HepG2 (cell line): ENCODE measurements at regions of chr12 and their contacts with region 1.

Region 1: GRCh38 chr12:82527165-82527780 is 159.4 kb upstream of the TMTC2 start:
- DNase-seq: peak; percentile 46
- ATAC-seq: peak; percentile 57; the same call in 2 of the 3 replicates
- H3K4me3 ChIP-seq: no peak overlapping the region
- H3K27ac ChIP-seq: no peak overlapping the region
- H3K4me1 ChIP-seq: peaks cover 8% of the 10 kb centered on the region; the same call in 1 of the 2 replicates
- H3K27me3 ChIP-seq: no peaks in the 10 kb centered on the region
- CTCF ChIP-seq: peak; percentile 72
- EP300 ChIP-seq: no peak
- POLR2A ChIP-seq: no peak
- RAD21 ChIP-seq: no peak; the same call in 1 of the 2 replicates

Region 2: DNA sequence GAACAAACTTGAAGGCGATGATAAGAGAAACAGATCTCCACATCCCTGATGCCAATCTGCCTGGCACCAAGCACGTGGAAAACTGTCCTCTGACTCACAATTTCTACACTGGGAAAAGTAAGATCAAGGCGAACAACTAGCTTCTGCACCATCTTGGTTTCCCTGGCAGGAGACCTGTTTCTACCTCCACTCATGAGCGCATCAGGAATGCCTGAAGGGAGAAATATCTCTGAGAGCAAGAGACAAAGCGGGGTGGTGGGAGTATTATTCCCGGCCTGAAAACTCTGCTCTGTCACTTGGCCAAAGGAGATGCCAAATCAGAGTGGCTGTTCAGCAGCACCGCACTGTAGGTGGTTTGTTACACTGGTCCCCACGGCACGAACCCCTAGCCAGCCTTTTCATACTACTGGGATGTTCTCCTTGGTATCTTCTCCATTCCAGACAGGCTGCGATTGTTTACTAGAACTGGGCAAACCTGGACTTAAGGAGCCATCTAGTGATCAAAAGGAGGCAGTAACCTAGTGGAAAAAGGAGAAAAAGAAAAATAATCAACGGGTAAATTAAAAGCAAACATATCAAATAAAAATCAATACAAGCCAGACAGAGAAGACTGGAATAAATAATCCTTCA is 100.4 kb after region 1 on chr12:
- CTCF ChIA-PET with region 1: no interaction called
- POLR2A ChIA-PET with region 1: no interaction called
- in situ Hi-C with region 1: no loop called
- intact Hi-C with region 1: loop called (anchors 1 kb)
- DNase-seq: peak; percentile 21
- ATAC-seq: peak; percentile 85
- H3K4me3 ChIP-seq: no peak overlapping the region
- H3K27ac ChIP-seq: no peak overlapping the region
- H3K4me1 ChIP-seq: no peaks in the 10 kb centered on the region
- H3K27me3 ChIP-seq: no peaks in the 10 kb centered on the region
- CTCF ChIP-seq: peak; percentile 62
- EP300 ChIP-seq: no peak
- POLR2A ChIP-seq: no peak
- RAD21 ChIP-seq: 0 out of 2 replicates have a peak, but pooled peaks have one; percentile 12

Region 3: GRCh38 chr12:82708061-82708879 is 181.0 kb after region 1 on chr12:
- CTCF ChIA-PET with region 1: no interaction called
- POLR2A ChIA-PET with region 1: no interaction called
- in situ Hi-C with region 1: no loop called
- intact Hi-C with region 1: no loop called
- DNase-seq: no peak
- ATAC-seq: peak; percentile 48; the same call in 2 of the 3 replicates
- H3K4me3 ChIP-seq: no peak overlapping the region
- H3K27ac ChIP-seq: no peak overlapping the region
- H3K4me1 ChIP-seq: no peaks in the 10 kb centered on the region
- H3K27me3 ChIP-seq: no peaks in the 10 kb centered on the region
- CTCF ChIP-seq: no peak
- EP300 ChIP-seq: no peak
- POLR2A ChIP-seq: no peak
- RAD21 ChIP-seq: no peak

Region 4: DNA sequence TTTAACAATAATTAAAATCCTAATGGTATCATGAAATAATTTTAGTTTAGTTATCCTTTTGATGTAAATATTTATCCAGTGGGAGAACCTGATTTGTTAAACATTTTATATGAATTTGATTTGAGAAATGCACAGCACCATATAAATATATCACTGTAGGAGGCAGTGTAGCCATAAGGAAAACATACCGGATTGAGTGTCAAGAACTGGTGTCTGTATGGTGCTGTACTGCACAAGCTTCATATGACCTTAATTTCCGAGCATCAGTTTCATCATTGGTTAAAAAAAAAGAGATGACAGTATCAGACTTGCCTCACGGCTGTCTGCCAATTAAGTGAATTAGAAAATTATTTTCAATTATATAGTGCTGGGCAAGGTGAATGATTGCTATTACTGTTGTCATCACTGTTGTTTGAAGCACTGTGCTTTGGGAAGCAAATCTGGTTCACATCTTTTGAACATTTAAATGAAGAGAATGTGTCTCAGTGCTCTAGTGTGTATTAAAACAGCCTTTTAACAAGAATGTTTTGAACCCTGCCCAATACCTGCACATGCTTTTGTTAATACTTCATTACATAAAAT is 231.6 kb after region 1 on chr12:
- CTCF ChIA-PET with region 1: no interaction called
- POLR2A ChIA-PET with region 1: no interaction called
- in situ Hi-C with region 1: no loop called
- intact Hi-C with region 1: no loop called
- DNase-seq: no peak
- ATAC-seq: no peak
- H3K4me3 ChIP-seq: no peak overlapping the region
- H3K27ac ChIP-seq: no peak overlapping the region
- H3K4me1 ChIP-seq: no peaks in the 10 kb centered on the region
- H3K27me3 ChIP-seq: no peaks in the 10 kb centered on the region
- CTCF ChIP-seq: no peak
- EP300 ChIP-seq: no peak
- POLR2A ChIP-seq: no peak
- RAD21 ChIP-seq: no peak

Region 5: DNA sequence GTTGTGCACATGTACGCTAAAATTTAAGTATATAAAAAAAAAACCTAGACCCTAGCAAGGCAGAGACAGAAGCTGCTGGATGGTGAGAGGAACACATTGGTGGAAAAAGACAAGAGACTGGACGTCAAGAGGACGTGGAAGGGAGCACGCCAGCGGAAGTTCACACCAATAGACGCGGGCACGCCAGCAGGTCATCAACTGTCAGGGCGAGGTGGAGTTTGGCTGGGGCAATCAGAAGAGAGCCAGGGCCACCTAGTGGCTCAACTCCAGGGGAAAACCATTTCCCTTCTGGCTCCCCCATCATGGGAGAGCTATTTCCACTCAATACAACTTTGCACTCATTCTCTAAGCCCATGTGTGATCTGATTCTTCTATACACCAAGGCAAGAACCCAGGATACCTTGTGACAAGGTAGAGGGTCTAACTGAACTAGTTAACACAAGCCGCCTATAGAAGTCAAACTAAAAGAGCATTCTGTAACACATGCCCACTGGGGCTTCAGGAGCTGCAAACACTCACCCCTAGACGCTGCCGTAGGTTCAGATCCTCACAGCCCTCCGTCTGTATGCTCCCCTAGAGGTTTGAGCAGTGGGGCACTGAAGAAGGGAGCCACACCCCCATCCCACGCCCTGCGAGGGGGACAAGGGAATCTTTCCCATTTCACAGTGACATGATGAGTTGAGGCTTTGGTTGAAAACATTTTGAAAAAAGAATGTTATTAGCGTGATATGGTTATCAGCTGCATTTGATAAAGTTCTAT is 862.1 kb after region 1 on chr12:
- CTCF ChIA-PET with region 1: no interaction called
- POLR2A ChIA-PET with region 1: no interaction called
- in situ Hi-C with region 1: no loop called
- intact Hi-C with region 1: loop called (anchors 5 kb)
- DNase-seq: no peak
- ATAC-seq: peak; percentile 37; the same call in 2 of the 3 replicates
- H3K4me3 ChIP-seq: no peak overlapping the region
- H3K27ac ChIP-seq: no peak overlapping the region
- H3K4me1 ChIP-seq: no peaks in the 10 kb centered on the region
- H3K27me3 ChIP-seq: no peaks in the 10 kb centered on the region
- CTCF ChIP-seq: peak; percentile 14; the same call in 1 of the 2 replicates
- EP300 ChIP-seq: no peak
- POLR2A ChIP-seq: no peak
- RAD21 ChIP-seq: no peak

Region 6: DNA sequence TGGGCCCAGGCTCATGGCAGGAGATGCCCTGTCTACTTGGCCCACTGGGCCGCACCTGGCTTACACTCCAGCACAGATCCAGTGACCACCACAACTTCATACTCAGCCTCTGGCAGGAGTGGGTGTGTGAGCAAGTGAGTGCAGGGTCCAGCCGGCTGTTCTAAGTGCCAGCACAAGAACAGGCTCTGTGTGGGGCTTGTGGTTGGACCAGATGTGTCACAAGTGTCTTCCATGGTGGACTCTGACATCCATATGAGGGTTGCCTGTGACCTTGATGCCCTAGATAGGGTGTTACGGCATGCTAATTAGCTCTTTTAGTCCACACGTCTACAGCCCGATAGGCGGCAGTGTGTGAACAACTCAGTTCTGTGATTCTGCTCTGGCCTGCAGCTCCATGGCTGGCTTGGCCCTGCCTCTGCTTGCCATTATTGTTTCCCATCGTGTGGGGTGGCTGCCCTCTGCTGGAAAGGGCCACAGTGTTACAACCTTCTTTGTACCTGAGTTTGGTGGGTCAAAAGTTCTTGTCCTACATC is 1296.2 kb after region 1 on chr12:
- CTCF ChIA-PET with region 1: no interaction called
- POLR2A ChIA-PET with region 1: no interaction called
- in situ Hi-C with region 1: no loop called
- intact Hi-C with region 1: loop called (anchors 5 kb)
- DNase-seq: peak; percentile 27
- ATAC-seq: peak; percentile 87
- H3K4me3 ChIP-seq: no peak overlapping the region
- H3K27ac ChIP-seq: no peak overlapping the region
- H3K4me1 ChIP-seq: no peaks in the 10 kb centered on the region
- H3K27me3 ChIP-seq: no peaks in the 10 kb centered on the region
- CTCF ChIP-seq: peak; percentile 42; the same call in 1 of the 2 replicates
- EP300 ChIP-seq: no peak
- POLR2A ChIP-seq: no peak
- RAD21 ChIP-seq: no peak

Region 7: DNA sequence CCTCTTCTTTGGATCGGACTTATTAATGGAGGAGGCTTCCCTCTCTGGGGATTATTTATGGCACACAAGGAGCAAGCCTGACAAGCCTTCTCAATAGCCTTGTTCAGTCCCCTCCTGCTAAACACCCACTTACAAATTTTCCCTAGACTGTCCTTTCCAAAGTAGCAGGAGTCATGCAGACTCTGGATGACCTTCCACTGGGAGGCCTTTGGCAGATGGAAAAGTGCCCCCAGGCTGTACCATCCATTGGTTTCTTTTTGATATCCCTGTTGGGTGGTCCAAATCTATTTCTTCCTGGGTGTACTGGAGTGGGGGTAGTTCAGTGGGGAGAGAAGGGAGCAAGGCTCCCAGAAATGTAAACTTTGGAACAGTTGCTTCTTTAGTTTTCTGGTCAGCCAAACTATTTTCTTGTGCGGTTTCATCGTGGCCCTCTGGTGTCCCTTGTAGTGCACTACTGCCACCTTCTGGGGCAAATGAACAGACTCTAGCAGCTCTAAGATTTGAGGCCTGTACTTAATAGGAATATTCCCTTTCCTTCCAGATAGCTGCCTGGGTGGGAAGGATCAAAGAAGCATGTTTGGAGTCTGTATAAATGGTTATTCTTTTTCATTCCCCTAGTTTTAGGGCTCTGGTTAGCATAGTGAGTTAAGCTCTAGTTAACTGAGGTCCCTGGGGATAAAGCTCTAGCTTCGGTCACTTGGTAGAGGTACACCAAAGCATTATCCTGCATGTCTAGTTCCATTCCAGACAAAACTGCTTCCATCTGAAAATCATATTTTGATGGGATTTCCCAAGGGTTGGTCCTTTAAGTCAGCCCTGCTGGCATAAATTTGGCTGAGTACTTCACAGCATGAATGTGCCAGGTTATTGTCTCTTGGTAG is 1975.9 kb after region 1 on chr12:
- CTCF ChIA-PET with region 1: interaction called, 4 read pairs
- POLR2A ChIA-PET with region 1: no interaction called
- in situ Hi-C with region 1: loop called (anchors 25 kb)
- intact Hi-C with region 1: loop called (anchors 1 kb)
- DNase-seq: peak; percentile 16
- ATAC-seq: peak; percentile 97
- H3K4me3 ChIP-seq: no peak overlapping the region
- H3K27ac ChIP-seq: no peak overlapping the region
- H3K4me1 ChIP-seq: no peaks in the 10 kb centered on the region
- H3K27me3 ChIP-seq: no peaks in the 10 kb centered on the region
- CTCF ChIP-seq: peak; percentile 67
- EP300 ChIP-seq: no peak
- POLR2A ChIP-seq: no peak
- RAD21 ChIP-seq: peak; percentile 33; the same call in 1 of the 2 replicates